ENCODE measurements at regions of chr6 and their contacts with region 1.

Region 1: DNA sequence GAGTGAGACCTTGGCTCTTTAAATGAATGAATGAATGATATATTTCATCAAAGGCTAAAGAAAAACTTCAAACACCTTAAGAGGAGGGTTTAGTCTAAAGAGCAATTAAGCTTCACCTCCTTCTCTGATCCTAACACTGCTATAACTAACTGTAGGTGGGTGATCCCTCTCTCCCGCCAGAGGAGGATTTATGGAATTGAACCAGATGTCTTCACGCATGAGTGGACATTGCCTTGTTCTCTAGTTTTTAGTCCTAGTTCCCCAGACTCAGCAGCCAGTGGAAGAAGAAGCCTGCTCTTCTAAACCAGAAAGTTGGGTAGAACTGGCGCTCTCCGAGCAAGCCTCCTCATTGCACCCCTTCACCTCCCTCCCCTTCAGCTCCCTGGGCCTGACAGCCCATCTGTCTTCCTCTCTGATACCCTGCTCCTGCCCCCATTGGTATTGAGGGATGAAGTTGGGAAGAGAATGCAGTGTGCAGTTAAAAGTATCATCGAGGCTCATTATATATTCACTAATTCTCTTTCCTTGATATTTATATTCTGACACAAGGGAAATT is 142.7 kb downstream of the ARID1B start:
- DNase-seq: no peak
- ATAC-seq: no peak
- H3K4me3 ChIP-seq: no peak overlapping the region
- H3K27ac ChIP-seq: no peak overlapping the region
- H3K4me1 ChIP-seq: peaks cover 10% of the 10 kb centered on the region
- H3K27me3 ChIP-seq: no peaks in the 10 kb centered on the region
- CTCF ChIP-seq: no peak
- POLR2A ChIP-seq: no peak
- RAD21 ChIP-seq: no peak

Region 2: GRCh38 chr6:156886409-156886808 is 33.5 kb before region 1 on chr6:
- CTCF ChIA-PET with region 1: no interaction called
- POLR2A ChIA-PET with region 1: no interaction called
- dilution Hi-C with region 1: no loop called
- in situ Hi-C with region 1: no loop called
- intact Hi-C with region 1: loop called (anchors 5 kb)
- DNase-seq: no peak
- ATAC-seq: no peak
- H3K4me3 ChIP-seq: no peak overlapping the region
- H3K27ac ChIP-seq: no peak overlapping the region
- H3K4me1 ChIP-seq: peaks cover 10% of the 10 kb centered on the region
- H3K27me3 ChIP-seq: no peaks in the 10 kb centered on the region
- CTCF ChIP-seq: no peak
- POLR2A ChIP-seq: no peak
- RAD21 ChIP-seq: no peak

Measured in IMR-90 (cell line).